ENCODE measurements at regions of chr12 and their contacts with region 1.

Region 1: DNA sequence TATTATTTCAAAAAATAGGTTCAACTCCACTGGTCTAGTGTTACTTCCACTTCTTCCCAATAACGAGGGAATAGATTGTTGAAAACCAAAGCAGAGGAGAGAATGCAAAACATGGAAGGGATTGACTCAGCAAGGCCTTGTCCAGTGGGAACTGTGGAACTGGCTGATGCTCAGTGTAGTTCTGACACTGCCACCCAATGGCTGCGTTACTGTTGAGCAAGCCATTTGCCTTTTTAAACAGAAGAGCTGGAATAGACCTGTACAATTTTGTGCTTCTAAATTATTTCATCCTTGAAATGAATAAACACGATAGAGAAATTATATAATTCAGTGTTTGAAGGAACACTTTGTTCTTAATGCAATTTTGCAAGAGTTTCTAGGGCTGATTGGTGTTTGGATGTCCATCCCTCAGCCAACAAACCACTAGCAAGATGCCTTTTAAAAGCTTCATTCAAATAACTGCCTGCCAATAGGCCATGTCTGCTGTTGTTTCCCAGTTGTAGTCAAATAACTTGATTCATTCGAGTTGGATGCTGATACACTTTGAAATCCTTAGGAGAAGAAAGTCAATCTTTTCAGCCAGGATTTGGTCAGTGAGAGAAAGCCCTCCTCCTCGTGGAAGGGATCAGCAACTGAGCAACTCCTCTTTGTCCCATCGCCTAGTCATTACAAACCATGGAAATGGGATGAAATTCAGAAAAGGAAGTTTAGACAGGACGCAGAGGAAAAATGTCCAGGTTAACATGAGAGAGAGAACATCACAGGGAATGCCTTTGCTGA is 7.3 kb upstream of the MGP start:
- DNase-seq: no peak

Region 2: GRCh38 chr12:14850929-14851663 is 41.8 kb before region 1 on chr12:
- intact Hi-C with region 1: loop called (anchors 2 kb)
- DNase-seq: no peak

Region 3: GRCh38 chr12:15011162-15011561 is 118.2 kb after region 1 on chr12:
- intact Hi-C with region 1: no loop called
- DNase-seq: no peak